Endothelial cell of umbilical vein (primary cell): ENCODE measurements at regions of chr4 and their contacts with region 1.

Region 1: DNA sequence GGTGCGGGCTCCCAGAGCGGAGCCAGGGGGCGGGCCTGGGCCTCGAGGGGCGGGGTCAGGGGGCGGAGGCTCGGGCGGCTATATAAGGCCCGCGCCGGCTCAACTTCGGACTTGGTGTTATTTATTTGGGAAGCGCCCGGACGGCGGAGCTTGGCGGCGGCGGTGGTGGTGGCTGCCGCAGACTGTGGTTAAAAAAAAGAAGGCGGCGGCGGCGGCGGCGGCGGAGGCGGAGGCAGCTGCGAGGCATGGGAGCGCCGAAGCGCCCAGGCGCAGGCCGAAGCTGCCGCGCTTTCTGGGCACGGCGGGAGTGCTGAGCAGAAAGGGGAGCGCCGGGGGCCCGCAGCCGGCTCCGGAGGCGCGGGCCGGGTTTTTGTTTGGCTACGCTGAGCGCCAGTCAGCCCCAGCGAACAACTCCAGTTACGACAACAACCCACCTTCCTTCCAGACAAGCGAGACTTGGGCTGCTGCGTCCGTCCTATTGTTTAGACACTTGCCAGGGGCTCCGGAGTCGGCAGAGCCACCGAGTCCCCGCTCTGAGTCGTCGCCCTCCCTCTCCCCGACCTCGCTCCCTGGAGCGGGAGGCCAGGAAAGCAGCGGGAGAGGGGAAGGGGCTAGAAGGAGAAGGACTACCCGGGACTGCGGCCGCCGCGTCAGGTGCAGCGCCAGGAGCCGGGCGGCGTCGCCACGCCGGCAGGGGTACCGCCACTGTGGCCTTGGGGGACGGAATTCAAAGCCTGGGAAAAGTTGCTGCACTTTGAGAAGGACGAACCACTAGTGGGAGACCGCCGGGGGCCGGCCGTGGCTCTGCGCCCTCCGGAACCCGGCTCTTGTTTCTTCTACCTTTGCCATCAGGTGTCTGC is at the start of gene SLIT2:
- DNase-seq: peak; percentile 87
- H3K4me3 ChIP-seq: peak within 1 kb of the TSS; percentile 69 to 80 (median 79)
- H3K27ac ChIP-seq: peak within 1 kb of the TSS; percentile 3
- H3K4me1 ChIP-seq: peaks cover 36% of the 10 kb centered on the region
- H3K27me3 ChIP-seq: no peaks in the 10 kb centered on the region
- CTCF ChIP-seq: no peak
- POLR2A ChIP-seq: peak; percentile 95
- total RNA-seq, gene SLIT2: 22.2 and 28.2 TPM in 2 replicates

Region 2: GRCh38 chr4:19486400-19486799 is 765.6 kb before region 1 on chr4:
- CTCF ChIA-PET with region 1: interaction called, 20 read pairs
- POLR2A ChIA-PET with region 1: no interaction called
- dilution Hi-C with region 1: no loop called
- intact Hi-C with region 1: loop called (anchors 1 kb)
- DNase-seq: peak; percentile 44
- H3K4me3 ChIP-seq: no peak overlapping the region
- H3K27ac ChIP-seq: no peak overlapping the region
- H3K4me1 ChIP-seq: no peaks in the 10 kb centered on the region
- H3K27me3 ChIP-seq: no peaks in the 10 kb centered on the region
- CTCF ChIP-seq: peak in 1 of 2 donors; percentile 24
- POLR2A ChIP-seq: no peak

Region 3: GRCh38 chr4:19791422-19792123 is 460.5 kb before region 1 on chr4:
- CTCF ChIA-PET with region 1: interaction called, 3 read pairs
- POLR2A ChIA-PET with region 1: no interaction called
- dilution Hi-C with region 1: no loop called
- intact Hi-C with region 1: loop called (anchors 2 kb)
- DNase-seq: peak; percentile 94
- H3K4me3 ChIP-seq: no peak overlapping the region
- H3K27ac ChIP-seq: peak overlapping the region; percentile 27
- H3K4me1 ChIP-seq: peaks cover 12% of the 10 kb centered on the region
- H3K27me3 ChIP-seq: no peaks in the 10 kb centered on the region
- CTCF ChIP-seq: peak; percentile 25 to 40
- POLR2A ChIP-seq: no peak

Region 4: DNA sequence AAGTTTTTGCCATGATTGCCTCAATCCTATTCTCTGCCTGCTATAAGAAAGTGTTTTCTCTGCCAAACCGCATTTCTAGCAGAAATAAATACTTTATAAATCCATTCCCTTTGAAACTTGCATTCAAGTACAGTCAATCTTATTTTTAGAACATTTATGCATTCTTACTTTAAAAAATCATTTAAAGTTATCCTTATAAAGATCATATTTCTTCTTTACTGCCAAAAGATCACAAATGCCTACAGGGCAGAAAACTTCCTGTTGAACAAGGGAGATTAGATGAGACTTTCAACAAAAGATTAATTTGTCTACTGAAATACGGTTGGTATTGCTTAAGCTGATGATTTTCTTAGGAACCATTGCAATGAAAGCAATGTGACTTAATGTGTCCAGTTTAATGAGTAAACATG is 207.5 kb before region 1 on chr4:
- CTCF ChIA-PET with region 1: no interaction called
- POLR2A ChIA-PET with region 1: no interaction called
- dilution Hi-C with region 1: no loop called
- intact Hi-C with region 1: loop called (anchors 5 kb)
- DNase-seq: peak; percentile 32
- H3K4me3 ChIP-seq: no peak overlapping the region
- H3K27ac ChIP-seq: no peak overlapping the region
- H3K4me1 ChIP-seq: peaks cover 28% of the 10 kb centered on the region
- H3K27me3 ChIP-seq: no peaks in the 10 kb centered on the region
- CTCF ChIP-seq: no peak
- POLR2A ChIP-seq: no peak

Region 5: GRCh38 chr4:20288846-20289512 is 37.0 kb after region 1 on chr4:
- CTCF ChIA-PET with region 1: interaction called, 4 read pairs
- POLR2A ChIA-PET with region 1: no interaction called
- dilution Hi-C with region 1: no loop called
- intact Hi-C with region 1: loop called (anchors 2 kb)
- DNase-seq: peak; percentile 42
- H3K4me3 ChIP-seq: no peak overlapping the region
- H3K27ac ChIP-seq: peak overlapping the region; percentile 55
- H3K4me1 ChIP-seq: peaks cover 33% of the 10 kb centered on the region
- H3K27me3 ChIP-seq: no peaks in the 10 kb centered on the region
- CTCF ChIP-seq: no peak
- POLR2A ChIP-seq: no peak

Region 6: DNA sequence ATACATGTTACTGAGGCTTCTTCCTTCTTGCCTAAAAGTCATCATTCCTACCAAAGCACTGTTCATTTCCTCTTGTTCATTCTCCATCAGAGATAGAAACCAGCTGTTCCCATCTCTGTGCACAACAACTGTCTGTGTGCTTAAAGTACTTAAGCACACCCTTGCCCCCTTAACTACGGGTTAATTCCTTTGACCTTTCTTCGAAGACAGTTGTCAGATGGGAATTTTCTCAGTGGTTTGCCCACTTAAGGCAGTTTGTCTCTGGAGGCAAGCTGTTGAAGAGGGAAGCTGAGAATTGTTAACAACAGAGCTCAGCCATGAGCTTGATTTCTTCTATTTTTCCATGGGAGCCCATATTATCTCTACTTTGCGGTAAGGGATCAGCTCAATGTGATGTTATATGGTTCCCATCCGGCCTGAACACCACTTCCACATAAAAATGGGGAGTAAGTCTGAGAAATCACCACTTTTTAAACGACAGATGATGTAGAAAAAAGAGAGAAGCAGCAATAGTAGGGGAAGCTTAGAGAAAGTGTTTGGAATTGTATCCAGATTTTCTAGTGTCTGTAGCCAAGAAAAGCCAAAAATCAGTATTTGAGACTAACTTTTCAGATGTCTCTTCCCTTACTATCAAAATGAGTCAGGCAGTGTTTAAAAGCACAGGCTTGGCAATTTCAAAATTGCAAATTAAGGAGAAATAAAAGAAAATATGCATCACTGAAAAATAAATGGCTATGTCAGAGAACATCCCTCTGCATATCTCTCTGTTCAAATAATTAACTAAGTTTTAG is 194.1 kb after region 1 on chr4:
- CTCF ChIA-PET with region 1: no interaction called
- POLR2A ChIA-PET with region 1: no interaction called
- dilution Hi-C with region 1: no loop called
- intact Hi-C with region 1: no loop called
- DNase-seq: no peak
- H3K4me3 ChIP-seq: no peak overlapping the region
- H3K27ac ChIP-seq: no peak overlapping the region
- H3K4me1 ChIP-seq: no peaks in the 10 kb centered on the region
- H3K27me3 ChIP-seq: no peaks in the 10 kb centered on the region
- CTCF ChIP-seq: no peak
- POLR2A ChIP-seq: no peak